Right ventricle myocardium superior (tissue), 1 donor: ENCODE measurements at regions of chr2 and their contacts with region 1.

Region 1: GRCh38 chr2:31170071-31170698 is 31.9 kb upstream of the GALNT14 start:
- DNase-seq: peak; percentile 58
- ATAC-seq: peak; percentile 94

Region 2: DNA sequence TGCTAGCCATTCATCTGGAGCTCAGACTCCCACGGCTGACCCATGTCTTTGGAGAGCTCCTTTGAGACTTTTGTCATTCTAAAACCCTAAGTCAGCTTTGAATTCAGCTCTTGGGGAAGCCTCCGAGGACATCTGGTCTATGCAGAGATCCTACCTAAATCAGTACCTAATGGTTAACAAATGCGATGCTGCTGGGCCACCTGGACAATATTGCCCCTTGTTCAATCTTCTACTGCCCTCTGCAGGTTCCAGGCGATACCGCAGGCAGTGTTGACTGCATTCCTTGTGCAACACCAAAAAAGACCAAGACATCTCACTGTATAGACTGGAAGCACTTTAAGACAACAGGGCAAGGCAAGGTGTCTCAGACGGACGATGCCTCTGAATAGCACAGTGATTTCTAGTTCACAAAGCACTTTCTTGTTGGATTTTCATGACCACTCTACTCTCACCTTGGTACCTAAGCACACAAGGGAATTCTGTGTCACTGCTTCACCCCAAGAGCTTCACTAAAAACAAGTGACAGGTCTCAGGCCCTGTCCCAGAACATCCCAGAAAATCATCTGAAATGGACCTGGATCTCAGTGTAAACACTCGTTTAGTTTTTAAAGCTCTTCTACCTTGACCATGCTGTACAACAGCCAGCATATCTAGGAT is 163.5 kb after region 1 on chr2:
- intact Hi-C with region 1: loop called (anchors 10 kb)
- DNase-seq: peak; percentile 80
- ATAC-seq: peak; percentile 86